Caco-2 (cell line): ENCODE measurements at regions of chr5 and their contacts with region 1.

Region 1: DNA sequence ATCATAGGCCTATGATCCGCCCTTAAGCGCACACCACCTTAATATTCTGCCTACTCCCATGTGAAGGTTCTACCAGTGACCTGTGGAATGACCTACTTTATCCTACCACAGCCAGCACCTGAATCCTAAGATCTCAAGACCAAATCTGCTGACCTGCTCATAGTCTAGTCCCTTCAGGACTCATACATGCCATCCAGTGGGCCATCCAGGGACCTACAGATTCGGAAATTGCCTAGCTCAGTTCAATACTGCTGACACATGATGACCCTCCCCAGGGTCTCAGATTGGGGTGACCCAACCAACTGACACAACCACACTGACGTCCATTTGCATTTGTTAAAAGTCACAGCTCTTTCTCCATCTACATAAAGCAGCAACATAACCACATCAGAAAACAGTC is 443.8 kb upstream of the ST8SIA4 start:
- DNase-seq: no peak
- H3K4me3 ChIP-seq: no peak overlapping the region
- H3K4me3 Mint-ChIP-seq: no peak overlapping the region
- H3K27ac Mint-ChIP-seq: no peak overlapping the region
- H3K4me1 ChIP-seq: no peaks in the 10 kb centered on the region
- H3K4me1 Mint-ChIP-seq: peaks cover 6% of the 10 kb centered on the region
- H3K27me3 ChIP-seq: no peaks in the 10 kb centered on the region
- H3K27me3 Mint-ChIP-seq: no peaks in the 10 kb centered on the region
- CTCF ChIP-seq: no peak

Region 2: GRCh38 chr5:100623719-100624118 is 723.2 kb before region 1 on chr5:
- CTCF ChIA-PET with region 1: no interaction called
- POLR2A ChIA-PET with region 1: no interaction called
- intact Hi-C with region 1: loop called (anchors 1 kb)
- DNase-seq: peak in 1 of 2 experiments; percentile 10
- H3K4me3 ChIP-seq: no peak overlapping the region
- H3K4me3 Mint-ChIP-seq: no peak overlapping the region
- H3K27ac Mint-ChIP-seq: no peak overlapping the region
- H3K4me1 ChIP-seq: no peaks in the 10 kb centered on the region
- H3K4me1 Mint-ChIP-seq: no peaks in the 10 kb centered on the region
- H3K27me3 ChIP-seq: no peaks in the 10 kb centered on the region
- H3K27me3 Mint-ChIP-seq: no peaks in the 10 kb centered on the region
- CTCF ChIP-seq: peak; percentile 34 to 45

Region 3: GRCh38 chr5:100777680-100778281 is 569.1 kb before region 1 on chr5:
- CTCF ChIA-PET with region 1: no interaction called
- POLR2A ChIA-PET with region 1: no interaction called
- intact Hi-C with region 1: loop called (anchors 10 kb)
- DNase-seq: no peak
- H3K4me3 ChIP-seq: no peak overlapping the region
- H3K4me3 Mint-ChIP-seq: no peak overlapping the region
- H3K27ac Mint-ChIP-seq: no peak overlapping the region
- H3K4me1 ChIP-seq: no peaks in the 10 kb centered on the region
- H3K4me1 Mint-ChIP-seq: peaks cover 8% of the 10 kb centered on the region
- H3K27me3 ChIP-seq: no peaks in the 10 kb centered on the region
- H3K27me3 Mint-ChIP-seq: no peaks in the 10 kb centered on the region
- CTCF ChIP-seq: no peak

Region 4: DNA sequence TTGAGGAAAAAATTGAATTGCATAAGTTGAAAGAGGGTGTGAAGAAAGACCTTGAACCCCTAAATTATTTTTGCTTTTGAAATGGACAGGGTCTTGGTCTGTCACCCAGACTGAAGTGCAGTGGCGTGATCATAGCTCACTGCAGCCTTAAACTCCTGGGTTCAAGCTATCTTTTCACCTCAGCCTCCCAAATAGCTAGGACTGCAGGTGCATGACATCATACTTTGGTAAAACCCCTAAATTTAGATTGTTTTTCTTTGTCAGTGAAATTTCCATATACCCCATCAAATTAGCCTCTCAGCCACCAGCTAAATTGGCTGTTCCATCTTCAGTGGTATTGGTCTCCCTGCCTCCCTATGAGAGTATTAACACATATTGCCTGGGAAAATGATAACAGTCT is 272.2 kb before region 1 on chr5:
- CTCF ChIA-PET with region 1: no interaction called
- POLR2A ChIA-PET with region 1: no interaction called
- intact Hi-C with region 1: loop called (anchors 10 kb)
- DNase-seq: no peak
- H3K4me3 ChIP-seq: no peak overlapping the region
- H3K4me3 Mint-ChIP-seq: no peak overlapping the region
- H3K27ac Mint-ChIP-seq: no peak overlapping the region
- H3K4me1 ChIP-seq: no peaks in the 10 kb centered on the region
- H3K4me1 Mint-ChIP-seq: no peaks in the 10 kb centered on the region
- H3K27me3 ChIP-seq: no peaks in the 10 kb centered on the region
- H3K27me3 Mint-ChIP-seq: no peaks in the 10 kb centered on the region
- CTCF ChIP-seq: no peak

Region 5: DNA sequence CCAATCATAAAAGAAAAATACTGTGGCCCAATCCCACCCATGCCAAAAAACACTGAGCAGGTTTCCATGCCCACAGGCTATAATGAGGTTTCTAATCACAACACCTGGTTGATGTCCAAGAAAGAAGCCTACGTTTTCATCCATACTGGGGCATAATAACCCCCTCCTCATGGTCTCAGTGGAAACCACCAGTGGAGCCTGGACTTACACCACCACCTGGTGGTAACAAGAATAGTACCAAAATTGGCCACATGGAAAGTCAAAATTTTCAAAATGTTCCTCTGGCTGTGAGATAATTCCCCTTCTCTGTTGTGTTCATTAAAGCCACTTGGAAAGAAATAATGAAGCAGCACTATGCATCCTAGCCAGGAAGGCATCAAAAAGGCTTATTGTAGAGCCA is 243.5 kb after region 1 on chr5:
- CTCF ChIA-PET with region 1: no interaction called
- POLR2A ChIA-PET with region 1: no interaction called
- intact Hi-C with region 1: loop called (anchors 5 kb)
- DNase-seq: peak in 1 of 2 experiments; percentile 13
- H3K4me3 ChIP-seq: no peak overlapping the region
- H3K4me3 Mint-ChIP-seq: no peak overlapping the region
- H3K27ac Mint-ChIP-seq: no peak overlapping the region
- H3K4me1 ChIP-seq: no peaks in the 10 kb centered on the region
- H3K4me1 Mint-ChIP-seq: no peaks in the 10 kb centered on the region
- H3K27me3 ChIP-seq: no peaks in the 10 kb centered on the region
- H3K27me3 Mint-ChIP-seq: no peaks in the 10 kb centered on the region
- CTCF ChIP-seq: peak; percentile 39 to 41